Aorta (tissue), 5 donors: ENCODE measurements at regions of chr17 and their contacts with region 1.

Region 1: GRCh38 chr17:77690271-77691161 is 268.0 kb upstream of the TNRC6C start:
- DNase-seq: peak in 1 of 2 donors; percentile 39
- ATAC-seq: no peak
- H3K4me3 ChIP-seq: peak overlapping the region in 1 of 2 donors; percentile 23
- H3K27ac ChIP-seq: no peak overlapping the region
- H3K4me1 ChIP-seq: no peaks in the 10 kb centered on the region
- H3K27me3 ChIP-seq: no peaks in the 10 kb centered on the region

Region 2: GRCh38 chr17:77609553-77610517 is 80.7 kb before region 1 on chr17:
- intact Hi-C with region 1: loop called in 1 of 2 experiments (anchors 10 kb)
- DNase-seq: peak; percentile 65 to 74
- ATAC-seq: peak; percentile 24
- H3K4me3 ChIP-seq: no peak overlapping the region
- H3K27ac ChIP-seq: no peak overlapping the region
- H3K4me1 ChIP-seq: no peaks in the 10 kb centered on the region
- H3K27me3 ChIP-seq: no peaks in the 10 kb centered on the region

Region 3: GRCh38 chr17:77723071-77723908 is 32.8 kb after region 1 on chr17:
- intact Hi-C with region 1: no loop called
- DNase-seq: peak in 1 of 2 donors; percentile 72
- ATAC-seq: no peak
- H3K4me3 ChIP-seq: no peak overlapping the region
- H3K27ac ChIP-seq: no peak overlapping the region
- H3K4me1 ChIP-seq: no peaks in the 10 kb centered on the region
- H3K27me3 ChIP-seq: no peaks in the 10 kb centered on the region